K562 (cell line): ENCODE measurements at regions of chr11 and their contacts with region 1.

Region 1: GRCh38 chr11:88377144-88377543 is 39.6 kb upstream of the CTSC start:
- DNase-seq: no peak
- ATAC-seq: no peak
- H3K4me3 ChIP-seq: no peak overlapping the region
- H3K27ac ChIP-seq: no peak overlapping the region
- H3K4me1 ChIP-seq: no peaks in the 10 kb centered on the region; a peak in 1 of 5 replicates
- H3K27me3 ChIP-seq: no peaks in the 10 kb centered on the region
- CTCF ChIP-seq: no peak
- EP300 ChIP-seq: no peak
- POLR2A ChIP-seq: no peak
- RAD21 ChIP-seq: no peak

Region 2: GRCh38 chr11:88013508-88014065 is 363.6 kb before region 1 on chr11:
- CTCF ChIA-PET with region 1: no interaction called
- POLR2A ChIA-PET with region 1: no interaction called
- in situ Hi-C with region 1: no loop called
- intact Hi-C with region 1: no loop called
- DNase-seq: no peak
- ATAC-seq: no peak
- H3K4me3 ChIP-seq: no peak overlapping the region
- H3K27ac ChIP-seq: no peak overlapping the region
- H3K4me1 ChIP-seq: no peaks in the 10 kb centered on the region
- H3K27me3 ChIP-seq: no peaks in the 10 kb centered on the region
- CTCF ChIP-seq: no peak
- EP300 ChIP-seq: no peak
- POLR2A ChIP-seq: no peak
- RAD21 ChIP-seq: no peak

Region 3: GRCh38 chr11:88152381-88152780 is 224.8 kb before region 1 on chr11:
- CTCF ChIA-PET with region 1: no interaction called
- POLR2A ChIA-PET with region 1: no interaction called
- in situ Hi-C with region 1: no loop called
- intact Hi-C with region 1: no loop called
- DNase-seq: no peak
- ATAC-seq: no peak
- H3K4me3 ChIP-seq: no peak overlapping the region
- H3K27ac ChIP-seq: no peak overlapping the region
- H3K4me1 ChIP-seq: no peaks in the 10 kb centered on the region
- H3K27me3 ChIP-seq: no peaks in the 10 kb centered on the region
- CTCF ChIP-seq: no peak
- EP300 ChIP-seq: no peak
- POLR2A ChIP-seq: no peak
- RAD21 ChIP-seq: no peak

Region 4: GRCh38 chr11:88421530-88421929 is 44.4 kb after region 1 on chr11:
- CTCF ChIA-PET with region 1: no interaction called
- POLR2A ChIA-PET with region 1: no interaction called
- in situ Hi-C with region 1: no loop called
- intact Hi-C with region 1: loop called (anchors 5 kb)
- DNase-seq: peak; percentile 19 to 86 (median 40)
- ATAC-seq: peak; percentile 74
- H3K4me3 ChIP-seq: no peak overlapping the region
- H3K27ac ChIP-seq: peak overlapping the region; percentile 73
- H3K4me1 ChIP-seq: peaks cover 0 to 38% of the 10 kb centered on the region in 2 experiments; a peak in 4 of 5 replicates
- H3K27me3 ChIP-seq: no peaks in the 10 kb centered on the region
- CTCF ChIP-seq: no peak
- EP300 ChIP-seq: peak; percentile 73; the same call in 1 of the 2 replicates
- POLR2A ChIP-seq: no peak
- RAD21 ChIP-seq: peak in 1 of 2 experiments; percentile 15; a peak in 1 of 4 replicates

Region 5: GRCh38 chr11:88475991-88476418 is 98.9 kb after region 1 on chr11:
- CTCF ChIA-PET with region 1: no interaction called
- POLR2A ChIA-PET with region 1: no interaction called
- in situ Hi-C with region 1: no loop called
- intact Hi-C with region 1: loop called (anchors 5 kb)
- DNase-seq: no peak
- ATAC-seq: no peak
- H3K4me3 ChIP-seq: no peak overlapping the region
- H3K27ac ChIP-seq: no peak overlapping the region
- H3K4me1 ChIP-seq: 0 out of 5 replicates have a peak, but pooled peaks cover 0 to 5% of the 10 kb centered on the region in 2 experiments
- H3K27me3 ChIP-seq: no peaks in the 10 kb centered on the region
- CTCF ChIP-seq: no peak
- EP300 ChIP-seq: no peak
- POLR2A ChIP-seq: no peak
- RAD21 ChIP-seq: no peak

Region 6: GRCh38 chr11:88494848-88495247 is 117.7 kb after region 1 on chr11:
- CTCF ChIA-PET with region 1: no interaction called
- POLR2A ChIA-PET with region 1: no interaction called
- in situ Hi-C with region 1: no loop called
- intact Hi-C with region 1: no loop called
- DNase-seq: peak in 2 of 4 experiments; percentile 10 to 35
- ATAC-seq: peak; percentile 92
- H3K4me3 ChIP-seq: no peak overlapping the region
- H3K27ac ChIP-seq: no peak overlapping the region
- H3K4me1 ChIP-seq: no peaks in the 10 kb centered on the region
- H3K27me3 ChIP-seq: no peaks in the 10 kb centered on the region
- CTCF ChIP-seq: peak; percentile 21 to 57 (median 33); a peak in 3 of 6 replicates
- EP300 ChIP-seq: no peak
- POLR2A ChIP-seq: no peak
- RAD21 ChIP-seq: peak; percentile 25 to 67; a peak in 3 of 4 replicates